Dendritic cell treated with granulocyte-macrophage colony-stimulating factor and Interleukin-4, amounts not matched to agents 40 ng/mL and 50 ng/mL, for 4 days (primary cell): ENCODE measurements at regions of chr6 and their contacts with region 1.

Region 1: DNA sequence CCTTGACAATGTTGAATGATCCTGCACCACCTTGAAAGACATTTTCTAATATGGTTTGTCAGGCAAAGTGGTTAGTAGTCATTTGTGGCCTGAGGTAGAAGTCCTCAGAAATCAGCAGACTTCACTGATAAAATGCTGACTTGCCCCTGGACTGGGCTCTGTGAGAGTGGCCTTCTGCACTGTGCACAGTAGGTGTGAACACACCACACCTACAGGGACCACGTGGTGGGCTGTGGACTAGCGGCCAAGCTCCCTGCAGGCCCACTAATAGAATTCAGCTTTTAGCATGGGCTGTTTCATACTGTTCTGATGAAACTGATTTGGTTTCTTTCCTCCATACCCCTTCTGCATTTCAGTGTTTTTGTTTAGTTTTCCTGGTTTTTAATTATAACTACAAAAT is 7.3 kb downstream of the BPHL start:
- H3K4me3 Mint-ChIP-seq: no peak overlapping the region
- H3K27ac Mint-ChIP-seq: no peak overlapping the region
- H3K4me1 Mint-ChIP-seq: no peaks in the 10 kb centered on the region
- H3K27me3 Mint-ChIP-seq: no peaks in the 10 kb centered on the region

Region 2: DNA sequence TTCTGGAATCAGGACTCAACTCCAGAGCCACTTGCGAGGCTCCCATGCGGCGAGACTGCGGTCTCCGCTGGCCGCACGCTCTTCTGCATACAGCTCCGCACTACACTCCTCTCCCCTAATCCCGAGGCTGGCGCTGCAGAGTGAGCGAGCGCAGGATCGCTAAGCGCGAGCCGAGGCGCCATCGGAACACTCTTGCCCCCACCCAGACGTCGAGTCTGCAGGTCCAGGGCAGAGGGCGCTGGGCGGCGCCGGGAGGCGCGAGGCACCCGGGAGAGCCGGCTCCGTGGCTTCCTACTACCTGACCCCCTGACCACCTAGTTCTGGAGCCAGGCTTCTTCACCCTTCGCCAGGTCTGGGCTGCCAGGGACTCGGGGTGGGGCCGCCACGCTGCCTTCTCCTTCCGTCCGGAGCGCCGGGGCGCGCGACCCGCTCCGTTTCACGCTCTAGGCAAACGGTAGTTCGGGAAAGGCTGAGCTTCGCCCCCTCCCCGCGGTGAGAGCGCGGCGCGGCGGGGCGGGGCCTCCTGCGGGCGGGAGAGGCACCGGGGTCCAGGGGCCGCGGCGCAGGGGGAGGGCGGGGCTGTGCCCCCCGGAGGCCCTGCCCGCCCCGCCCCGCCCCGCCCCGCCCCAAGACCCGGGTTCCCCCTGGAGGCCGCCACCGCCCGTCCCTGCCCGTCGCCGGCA is 36.9 kb after region 1 on chr6:
- intact Hi-C with region 1: loop called (anchors 5 kb)
- H3K4me3 Mint-ChIP-seq: peak overlapping the region; percentile 85
- H3K27ac Mint-ChIP-seq: peak overlapping the region; percentile 83
- H3K4me1 Mint-ChIP-seq: peaks cover 37% of the 10 kb centered on the region
- H3K27me3 Mint-ChIP-seq: peaks cover 46% of the 10 kb centered on the region

Region 3: DNA sequence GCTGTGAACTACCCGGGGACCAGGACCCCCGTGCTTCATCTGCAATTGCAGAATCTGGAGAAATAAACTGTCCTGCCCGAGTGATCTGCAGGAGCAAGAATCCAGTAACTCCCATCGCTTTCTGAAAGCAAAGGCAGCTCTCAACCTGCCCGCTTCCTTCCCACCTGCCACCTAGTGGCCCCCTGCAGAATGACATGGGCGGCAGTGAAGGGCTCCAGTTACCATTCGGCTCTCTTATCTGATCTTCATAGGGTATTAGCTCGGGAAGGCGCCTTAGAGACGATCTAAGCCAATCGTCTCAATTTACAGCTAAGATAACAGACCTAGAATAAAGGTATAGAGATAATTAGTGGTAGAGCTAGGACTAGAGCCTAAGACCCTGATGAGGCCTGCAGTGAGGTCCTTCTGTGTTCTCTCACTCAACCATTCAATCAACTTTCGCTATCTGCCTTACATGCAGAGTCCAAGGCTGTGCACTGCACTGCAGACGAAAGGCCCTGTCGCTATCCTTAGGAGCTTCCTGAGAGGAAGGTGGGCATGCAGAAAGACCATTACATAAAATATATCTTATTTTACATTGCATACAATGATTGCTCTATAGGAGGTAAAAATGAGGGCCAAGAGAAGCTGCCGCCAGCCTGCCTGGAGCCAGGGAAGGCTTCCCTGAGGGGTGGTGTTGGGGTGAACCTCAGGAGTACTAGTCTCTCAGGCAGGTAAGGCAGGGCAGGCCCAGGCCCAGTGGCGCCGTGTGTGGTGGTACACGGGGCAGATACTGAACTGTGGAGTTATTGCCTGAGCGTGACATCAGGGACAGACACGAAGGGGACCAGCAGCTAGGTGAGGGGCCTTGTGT is 125.9 kb after region 1 on chr6:
- intact Hi-C with region 1: loop called (anchors 1 kb)
- H3K4me3 Mint-ChIP-seq: no peak overlapping the region
- H3K27ac Mint-ChIP-seq: no peak overlapping the region
- H3K4me1 Mint-ChIP-seq: peaks cover 16% of the 10 kb centered on the region
- H3K27me3 Mint-ChIP-seq: peaks cover 55% of the 10 kb centered on the region

Region 4: GRCh38 chr6:3732345-3733141 is 606.7 kb after region 1 on chr6:
- intact Hi-C with region 1: loop called (anchors 10 kb)
- H3K4me3 Mint-ChIP-seq: no peak overlapping the region
- H3K27ac Mint-ChIP-seq: no peak overlapping the region
- H3K4me1 Mint-ChIP-seq: peaks cover 9% of the 10 kb centered on the region
- H3K27me3 Mint-ChIP-seq: no peaks in the 10 kb centered on the region

Region 5: GRCh38 chr6:3990692-3991501 is 865.1 kb after region 1 on chr6:
- intact Hi-C with region 1: no loop called
- H3K4me3 Mint-ChIP-seq: no peak overlapping the region
- H3K27ac Mint-ChIP-seq: peak overlapping the region; percentile 60
- H3K4me1 Mint-ChIP-seq: peaks cover 16% of the 10 kb centered on the region
- H3K27me3 Mint-ChIP-seq: no peaks in the 10 kb centered on the region